ENCODE measurements at regions of chr5 and their contacts with region 1.

Region 1: GRCh38 chr5:91101600-91102379 is 281.3 kb downstream of the ARRDC3 start:
- DNase-seq: peak; percentile 25
- H3K4me3 Mint-ChIP-seq: no peak overlapping the region
- H3K27ac Mint-ChIP-seq: no peak overlapping the region
- H3K4me1 Mint-ChIP-seq: no peaks in the 10 kb centered on the region
- H3K27me3 Mint-ChIP-seq: peaks cover 12% of the 10 kb centered on the region

Region 2: DNA sequence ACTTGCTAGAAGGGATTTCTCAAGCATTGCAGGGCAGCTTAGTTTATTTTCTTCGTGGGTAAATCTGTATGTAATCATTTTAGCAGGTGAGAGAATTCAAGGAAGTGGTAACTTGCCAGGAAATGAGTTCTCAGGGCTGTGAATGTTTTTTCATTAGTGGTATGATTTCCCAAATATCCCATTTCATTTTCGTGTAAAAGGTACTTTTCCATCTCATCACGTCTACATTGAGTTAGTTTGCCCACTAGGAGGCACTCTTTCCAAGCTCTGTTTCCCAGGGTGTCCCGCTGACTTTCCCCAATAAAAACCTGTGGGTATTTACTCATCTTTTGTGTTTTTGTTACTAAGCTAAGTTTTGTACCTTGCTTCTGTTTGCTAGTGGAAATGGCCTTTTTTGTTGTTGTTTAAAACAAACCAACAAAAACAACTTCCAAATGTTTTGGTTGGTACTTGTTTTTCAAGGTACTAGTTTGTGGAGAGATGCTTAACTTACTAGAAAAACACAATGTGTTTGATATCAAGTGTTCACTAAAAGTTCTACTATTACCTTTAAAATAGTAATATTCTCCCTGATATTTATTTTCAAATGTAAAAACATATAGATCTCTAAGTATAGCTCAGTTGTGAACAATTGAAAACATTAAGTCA is 169.6 kb before region 1 on chr5:
- intact Hi-C with region 1: loop called (anchors 5 kb)
- DNase-seq: no peak
- H3K4me3 Mint-ChIP-seq: no peak overlapping the region
- H3K27ac Mint-ChIP-seq: no peak overlapping the region
- H3K4me1 Mint-ChIP-seq: peaks cover 5% of the 10 kb centered on the region
- H3K27me3 Mint-ChIP-seq: peaks cover 6% of the 10 kb centered on the region

Region 3: DNA sequence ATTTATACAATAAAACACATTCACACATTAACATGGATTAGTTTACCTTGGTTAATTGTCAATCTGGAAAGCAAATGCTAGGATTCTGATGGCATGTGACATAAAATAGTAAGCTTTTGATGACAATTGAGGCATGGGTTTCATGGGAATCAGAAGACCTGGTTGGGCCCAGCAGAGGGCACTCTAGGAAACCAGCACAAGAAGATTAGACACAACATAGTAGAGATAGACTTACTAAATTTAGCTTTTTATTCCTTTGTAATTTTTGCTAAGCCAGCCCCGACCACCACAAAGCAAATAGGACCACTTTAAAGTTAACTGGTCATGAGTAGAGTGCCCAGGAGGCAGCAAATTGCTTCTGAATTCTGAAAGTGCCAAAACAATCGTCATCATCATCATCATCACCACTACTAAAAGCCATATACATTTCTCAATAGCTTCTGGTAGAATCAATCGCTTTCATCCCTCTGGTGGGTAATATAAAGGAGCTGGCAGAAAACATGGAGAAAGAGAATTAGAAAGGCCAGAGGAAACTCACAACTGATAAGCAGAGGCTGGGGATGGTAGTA is 118.1 kb after region 1 on chr5:
- intact Hi-C with region 1: loop called (anchors 2 kb)
- DNase-seq: peak; percentile 2
- H3K4me3 Mint-ChIP-seq: no peak overlapping the region
- H3K27ac Mint-ChIP-seq: no peak overlapping the region
- H3K4me1 Mint-ChIP-seq: no peaks in the 10 kb centered on the region
- H3K27me3 Mint-ChIP-seq: peaks cover 11% of the 10 kb centered on the region

Region 4: GRCh38 chr5:91850031-91850430 is 748.2 kb after region 1 on chr5:
- intact Hi-C with region 1: no loop called
- DNase-seq: no peak
- H3K4me3 Mint-ChIP-seq: no peak overlapping the region
- H3K27ac Mint-ChIP-seq: no peak overlapping the region
- H3K4me1 Mint-ChIP-seq: no peaks in the 10 kb centered on the region
- H3K27me3 Mint-ChIP-seq: no peaks in the 10 kb centered on the region

Measured in activated T-helper 1 cell treated with anti-CD3 and anti-CD28 coated beads, Interleukin-12 subunit alpha, Interleukin-12 subunit beta, Interleukin-2, Interleukin-4 antibody, amounts not matched to agents 30 ng/mL and 10 ng/mL and 1 ng/mL, durations not matched to agents 14 hours and 24 hours and 36 hours (primary cell).